PC-9 (cell line): ENCODE measurements at regions of chr1 and their contacts with region 1.

Region 1: DNA sequence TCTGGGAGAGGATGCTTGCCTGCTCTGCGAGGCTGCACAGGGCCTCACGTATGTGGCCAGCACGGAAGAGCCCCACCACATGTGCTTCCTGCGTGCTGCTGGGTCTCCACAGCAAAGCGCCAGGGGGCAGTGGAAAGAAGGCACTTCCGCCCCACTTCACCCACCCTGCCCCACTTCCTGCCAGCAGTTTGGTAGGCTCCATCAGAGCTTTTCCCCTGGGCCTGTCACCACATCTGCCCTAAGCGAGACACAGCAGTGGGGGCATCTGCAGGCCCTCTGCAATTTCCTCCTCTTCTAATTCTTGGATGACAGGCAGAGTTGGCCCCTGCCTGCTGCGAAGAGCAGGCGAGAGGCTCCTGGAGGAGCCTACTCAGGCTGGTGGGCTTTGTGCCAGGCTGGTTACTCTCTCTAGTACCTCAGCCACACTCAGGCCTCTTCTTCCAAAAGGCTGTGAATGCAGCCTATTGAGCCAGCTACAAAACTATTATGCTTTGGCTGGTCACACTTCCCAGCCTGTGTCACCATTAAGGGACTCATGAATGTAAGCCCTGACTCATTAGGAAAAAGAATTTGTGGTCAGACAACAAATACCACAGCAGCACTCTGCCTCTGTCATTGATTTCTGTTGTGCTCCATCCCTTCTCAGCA is 25.0 kb downstream of the CD244 start:
- DNase-seq: peak; percentile 46 to 74
- H3K4me3 ChIP-seq: no peak overlapping the region
- H3K27ac ChIP-seq: no peak overlapping the region
- H3K4me1 ChIP-seq: peaks cover 4% of the 10 kb centered on the region; the same call in 1 of the 2 replicates
- H3K27me3 ChIP-seq: no peaks in the 10 kb centered on the region
- CTCF ChIP-seq: no peak

Region 2: DNA sequence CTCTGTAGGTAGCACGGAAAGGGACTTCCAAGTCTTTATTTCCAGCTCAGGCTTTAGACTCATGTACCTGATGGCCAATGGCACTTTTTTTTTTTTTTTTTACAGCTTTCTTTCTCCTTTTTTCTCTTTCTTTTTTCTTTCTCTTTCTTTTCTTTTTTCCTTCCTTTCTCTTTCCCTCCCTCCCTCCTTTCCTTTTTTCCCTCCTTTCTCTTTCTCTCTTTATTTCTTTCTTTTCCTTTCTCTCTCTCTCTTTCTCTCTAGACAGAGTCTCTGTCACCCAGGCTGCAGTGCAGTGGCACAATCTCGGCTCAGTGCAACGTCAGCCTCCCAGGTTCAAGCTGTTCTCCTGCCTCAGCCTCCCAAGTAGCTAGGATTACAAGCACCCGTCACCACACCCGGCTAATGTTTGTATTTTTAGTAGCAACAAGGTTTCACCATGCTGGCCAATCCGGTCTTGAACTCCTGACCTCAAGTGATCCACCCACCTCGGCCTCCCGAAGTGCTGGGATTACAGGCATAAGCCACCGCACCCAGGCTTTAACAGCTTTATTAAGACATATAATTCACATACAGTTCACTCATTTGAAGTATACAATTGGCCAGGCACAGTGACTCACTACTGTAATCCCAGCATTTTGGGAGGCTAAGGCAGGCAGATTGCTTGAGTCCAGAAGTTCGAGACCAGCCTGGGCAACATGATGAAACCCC is 570.2 kb before region 1 on chr1:
- CTCF ChIA-PET with region 1: no interaction called
- POLR2A ChIA-PET with region 1: no interaction called
- intact Hi-C with region 1: no loop called
- DNase-seq: no peak
- H3K4me3 ChIP-seq: no peak overlapping the region
- H3K27ac ChIP-seq: no peak overlapping the region
- H3K4me1 ChIP-seq: peaks cover 9% of the 10 kb centered on the region; the same call in 1 of the 2 replicates
- H3K27me3 ChIP-seq: no peaks in the 10 kb centered on the region
- CTCF ChIP-seq: no peak

Region 3: GRCh38 chr1:160726498-160727315 is 111.0 kb before region 1 on chr1:
- CTCF ChIA-PET with region 1: interaction called, 3 read pairs
- POLR2A ChIA-PET with region 1: no interaction called
- intact Hi-C with region 1: loop called (anchors 2 kb)
- DNase-seq: peak; percentile 51 to 63
- H3K4me3 ChIP-seq: no peak overlapping the region
- H3K27ac ChIP-seq: peak overlapping the region; percentile 50
- H3K4me1 ChIP-seq: peaks cover 18% of the 10 kb centered on the region
- H3K27me3 ChIP-seq: no peaks in the 10 kb centered on the region
- CTCF ChIP-seq: peak; percentile 93

Region 4: GRCh38 chr1:160818207-160818937 is 19.3 kb before region 1 on chr1:
- CTCF ChIA-PET with region 1: no interaction called
- POLR2A ChIA-PET with region 1: no interaction called
- intact Hi-C with region 1: no loop called
- DNase-seq: no peak
- H3K4me3 ChIP-seq: no peak overlapping the region
- H3K27ac ChIP-seq: no peak overlapping the region
- H3K4me1 ChIP-seq: peaks cover 7% of the 10 kb centered on the region
- H3K27me3 ChIP-seq: no peaks in the 10 kb centered on the region
- CTCF ChIP-seq: no peak

Region 5: GRCh38 chr1:160951443-160952128 is 113.9 kb after region 1 on chr1:
- CTCF ChIA-PET with region 1: interaction called, 5 read pairs
- POLR2A ChIA-PET with region 1: no interaction called
- intact Hi-C with region 1: loop called (anchors 1 kb)
- DNase-seq: peak; percentile 40 to 62
- H3K4me3 ChIP-seq: no peak overlapping the region
- H3K27ac ChIP-seq: no peak overlapping the region
- H3K4me1 ChIP-seq: no peaks in the 10 kb centered on the region
- H3K27me3 ChIP-seq: no peaks in the 10 kb centered on the region
- CTCF ChIP-seq: peak; percentile 83

Region 6: DNA sequence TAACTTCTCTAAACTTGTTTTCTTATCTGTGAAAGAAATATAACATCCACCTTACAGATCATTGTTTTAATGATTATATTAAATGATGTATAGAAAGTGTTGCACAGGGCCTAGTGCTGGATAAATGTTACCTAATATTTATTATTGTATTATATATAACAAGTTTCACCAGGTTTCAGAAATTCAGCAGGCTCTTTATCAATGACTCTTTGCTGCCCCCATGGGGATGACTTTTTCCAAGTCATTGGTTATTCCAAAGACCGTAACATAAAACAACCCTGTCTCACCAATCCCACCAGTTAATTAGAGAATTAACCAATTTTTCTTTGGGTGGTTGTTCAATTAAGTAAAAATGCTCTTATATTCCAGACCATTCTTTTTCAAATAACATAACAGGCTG is 302.1 kb after region 1 on chr1:
- CTCF ChIA-PET with region 1: no interaction called
- POLR2A ChIA-PET with region 1: no interaction called
- intact Hi-C with region 1: loop called (anchors 2 kb)
- DNase-seq: peak in 1 of 2 experiments; percentile 37
- H3K4me3 ChIP-seq: no peak overlapping the region
- H3K27ac ChIP-seq: no peak overlapping the region
- H3K4me1 ChIP-seq: peaks cover 16% of the 10 kb centered on the region
- H3K27me3 ChIP-seq: no peaks in the 10 kb centered on the region
- CTCF ChIP-seq: peak; percentile 80